ENCODE measurements at regions of chr4 and their contacts with region 1.

Region 1: DNA sequence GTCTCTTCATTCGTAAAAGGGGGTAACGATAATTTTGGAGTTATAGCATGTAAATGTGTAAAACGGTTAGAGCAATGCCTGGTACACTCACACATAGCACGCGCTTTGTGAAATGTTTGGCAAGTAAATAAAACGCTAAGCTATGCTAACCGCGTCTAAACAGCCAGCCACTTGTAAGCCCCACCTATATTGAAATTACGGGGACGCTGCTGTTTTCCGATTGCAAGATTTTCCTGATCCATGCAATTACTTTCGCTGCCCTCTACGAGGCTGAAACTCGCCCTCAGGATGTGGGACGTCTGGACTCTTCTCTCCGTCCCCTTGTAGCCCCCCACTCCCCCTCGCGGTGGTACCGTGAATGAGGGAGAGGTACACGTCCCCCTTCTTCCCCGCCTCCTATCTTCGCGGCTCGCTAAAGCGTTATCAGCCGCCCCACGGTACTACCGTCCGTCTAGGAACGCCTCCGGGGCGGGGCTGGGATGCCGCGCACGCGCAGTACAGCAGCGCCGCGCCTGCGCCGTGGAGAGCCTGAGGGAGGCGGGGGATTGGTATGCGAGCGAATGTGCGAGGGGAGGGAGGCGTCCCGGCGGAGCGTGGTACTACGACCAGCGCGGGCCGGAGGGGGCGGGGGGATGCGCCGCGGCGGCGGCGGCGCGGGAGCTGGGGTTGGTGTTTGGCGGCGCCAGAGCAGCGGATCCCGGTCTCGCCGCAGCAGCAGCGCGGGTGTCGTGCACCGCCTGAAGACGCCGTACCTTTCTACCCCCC is at the start of gene STIM2:
- DNase-seq: peak; percentile 100
- H3K4me3 Mint-ChIP-seq: peak within 1 kb of the TSS; percentile 96
- H3K27ac Mint-ChIP-seq: peak within 1 kb of the TSS; percentile 98
- H3K4me1 Mint-ChIP-seq: peaks cover 54% of the 10 kb centered on the region
- H3K27me3 Mint-ChIP-seq: no peaks in the 10 kb centered on the region
- total RNA-seq, gene STIM2: 43.2 and 46.0 TPM in 2 replicates

Region 2: GRCh38 chr4:25913851-25914669 is 946.3 kb before region 1 on chr4 and contains the start of gene SMIM20:
- intact Hi-C with region 1: loop called (anchors 1 kb)
- DNase-seq: peak; percentile 96
- H3K4me3 Mint-ChIP-seq: peak within 1 kb of the TSS; percentile 96
- H3K27ac Mint-ChIP-seq: peak within 1 kb of the TSS; percentile 99
- H3K4me1 Mint-ChIP-seq: peaks cover 17% of the 10 kb centered on the region
- H3K27me3 Mint-ChIP-seq: peaks cover 9% of the 10 kb centered on the region
- total RNA-seq, gene SMIM20: 17.0 and 18.9 TPM in 2 replicates

Region 3: DNA sequence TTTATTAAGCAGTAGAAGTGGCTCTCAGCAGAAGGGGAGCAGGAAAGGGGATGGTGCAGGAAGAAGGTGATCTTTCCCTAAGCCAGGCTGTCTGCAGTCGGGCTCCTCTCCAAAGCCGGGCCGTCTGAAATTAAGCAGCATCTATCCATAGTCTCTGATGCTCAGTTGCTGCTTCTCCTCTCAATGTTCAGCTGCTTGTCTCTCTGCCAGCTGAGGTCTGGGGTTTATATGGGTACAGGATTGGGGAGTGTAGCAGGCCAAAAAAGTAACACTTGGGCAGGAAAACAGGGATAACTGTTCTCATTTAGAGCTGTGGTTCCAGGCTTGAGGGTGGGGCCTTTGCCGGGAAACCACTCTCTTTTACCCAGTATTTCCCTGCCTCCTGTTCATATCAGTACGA is 330.9 kb before region 1 on chr4:
- intact Hi-C with region 1: no loop called
- DNase-seq: no peak
- H3K4me3 Mint-ChIP-seq: no peak overlapping the region
- H3K27ac Mint-ChIP-seq: no peak overlapping the region
- H3K4me1 Mint-ChIP-seq: no peaks in the 10 kb centered on the region
- H3K27me3 Mint-ChIP-seq: no peaks in the 10 kb centered on the region

Region 4: GRCh38 chr4:26583865-26584652 is 276.3 kb before region 1 on chr4 and contains the start of gene TBC1D19:
- intact Hi-C with region 1: loop called (anchors 2 kb)
- DNase-seq: peak; percentile 96
- H3K4me3 Mint-ChIP-seq: peak within 1 kb of the TSS; percentile 98
- H3K27ac Mint-ChIP-seq: peak within 1 kb of the TSS; percentile 95
- H3K4me1 Mint-ChIP-seq: peaks cover 27% of the 10 kb centered on the region
- H3K27me3 Mint-ChIP-seq: no peaks in the 10 kb centered on the region
- total RNA-seq, gene TBC1D19: 3.3 and 3.6 TPM in 2 replicates

Region 5: GRCh38 chr4:26822546-26822945 is 37.8 kb before region 1 on chr4:
- intact Hi-C with region 1: loop called (anchors 1 kb)
- DNase-seq: no peak
- H3K4me3 Mint-ChIP-seq: no peak overlapping the region
- H3K27ac Mint-ChIP-seq: no peak overlapping the region
- H3K4me1 Mint-ChIP-seq: peaks cover 15% of the 10 kb centered on the region
- H3K27me3 Mint-ChIP-seq: no peaks in the 10 kb centered on the region

Region 6: DNA sequence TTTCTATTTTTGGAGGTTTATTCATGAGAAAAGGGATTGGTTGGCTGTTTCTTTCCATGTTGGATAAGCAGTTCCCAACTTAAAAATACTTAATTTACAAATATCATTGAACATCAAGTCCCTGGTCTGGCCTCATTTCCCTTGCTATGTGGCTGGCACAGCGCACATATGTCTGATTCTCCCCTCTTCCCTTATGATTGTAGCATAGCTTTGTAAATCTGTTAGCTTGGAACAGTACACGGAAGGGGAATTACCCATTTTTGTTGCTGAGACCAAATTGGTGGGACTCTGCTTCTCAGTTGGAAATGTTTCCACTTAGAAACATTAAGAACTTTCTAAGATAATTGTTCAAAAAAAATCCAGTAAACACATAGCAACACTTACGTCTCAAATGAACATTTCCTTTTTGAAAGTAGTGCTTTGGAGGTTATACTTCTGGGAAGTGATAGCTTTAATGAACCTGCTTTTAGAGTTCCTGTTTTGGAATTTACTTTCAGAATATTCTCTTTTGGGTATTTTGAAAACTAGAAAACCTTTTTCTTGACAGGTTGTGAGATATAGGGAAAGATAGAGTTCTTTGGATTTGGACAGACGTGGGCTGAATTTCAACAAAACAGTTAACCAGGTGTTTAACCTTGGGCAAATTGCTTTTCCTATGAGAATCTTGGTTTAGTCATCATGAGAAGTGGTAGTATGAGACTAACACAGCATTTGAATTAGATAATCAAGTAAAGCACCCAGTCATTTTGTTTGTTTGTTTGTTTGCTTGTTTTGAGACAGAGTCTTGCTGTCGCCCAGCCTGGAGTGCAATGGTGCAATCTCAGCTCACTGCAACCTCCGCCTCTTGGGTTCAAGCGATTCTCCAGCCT is 47.6 kb after region 1 on chr4:
- intact Hi-C with region 1: loop called (anchors 1 kb)
- DNase-seq: no peak
- H3K4me3 Mint-ChIP-seq: peak overlapping the region; percentile 37
- H3K27ac Mint-ChIP-seq: peak overlapping the region; percentile 81
- H3K4me1 Mint-ChIP-seq: peaks cover 55% of the 10 kb centered on the region
- H3K27me3 Mint-ChIP-seq: no peaks in the 10 kb centered on the region

Region 7: GRCh38 chr4:27000820-27001219 is 140.5 kb after region 1 on chr4:
- intact Hi-C with region 1: loop called (anchors 2 kb)
- DNase-seq: peak; percentile 70
- H3K4me3 Mint-ChIP-seq: no peak overlapping the region
- H3K27ac Mint-ChIP-seq: no peak overlapping the region
- H3K4me1 Mint-ChIP-seq: peaks cover 36% of the 10 kb centered on the region
- H3K27me3 Mint-ChIP-seq: no peaks in the 10 kb centered on the region